ENCODE measurements at regions of chr15 and their contacts with region 1.

Region 1: DNA sequence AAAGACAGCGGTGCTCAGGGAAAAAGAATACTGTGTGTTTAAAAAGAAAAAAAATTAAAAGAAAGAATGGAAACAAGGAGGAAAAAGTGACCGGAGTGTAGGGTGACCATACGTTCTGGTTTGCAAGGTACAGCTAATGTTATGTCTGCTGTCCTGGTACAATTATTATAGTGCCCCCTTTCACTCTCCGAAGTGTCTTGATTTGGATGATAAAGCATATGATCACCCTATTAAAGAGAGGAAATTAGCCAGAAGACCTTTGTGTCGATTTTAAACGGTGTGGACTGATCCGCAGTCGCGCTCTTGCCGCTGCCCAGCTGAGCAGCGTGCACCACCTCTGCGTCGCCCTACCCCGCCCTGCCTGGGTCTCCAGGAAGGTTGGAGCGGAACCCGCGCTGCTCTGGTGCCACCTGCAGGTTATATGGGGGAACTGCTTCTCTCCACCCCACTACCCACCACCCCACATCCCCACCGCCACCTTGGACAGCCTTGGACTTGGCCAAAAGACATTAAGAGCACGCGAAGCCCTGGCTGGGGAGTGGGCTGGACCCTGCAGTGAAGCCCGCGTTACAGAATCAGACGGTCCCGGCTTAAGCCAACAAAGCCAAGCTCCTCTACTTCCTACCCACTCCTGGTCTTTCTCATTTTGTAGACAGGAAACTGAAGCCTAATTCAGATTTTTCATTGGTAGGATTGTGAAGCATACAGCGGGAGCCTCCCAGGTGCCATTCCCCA is 41.2 kb upstream of the UBE2Q2 start:
- DNase-seq: peak; percentile 54
- ATAC-seq: peak; percentile 100
- H3K4me3 ChIP-seq: peak overlapping the region; percentile 35; the same call in 1 of the 2 replicates
- H3K27ac ChIP-seq: no peak overlapping the region
- H3K4me1 ChIP-seq: no peaks in the 10 kb centered on the region
- H3K27me3 ChIP-seq: peaks cover 38% of the 10 kb centered on the region
- CTCF ChIP-seq: peak; percentile 82
- POLR2A ChIP-seq: no peak
- RAD21 ChIP-seq: peak; percentile 89

Region 2: GRCh38 chr15:75123395-75123794 is 678.6 kb before region 1 on chr15:
- CTCF ChIA-PET with region 1: no interaction called
- POLR2A ChIA-PET with region 1: no interaction called
- dilution Hi-C with region 1: no loop called
- in situ Hi-C with region 1: no loop called
- intact Hi-C with region 1: no loop called
- DNase-seq: peak; percentile 72
- ATAC-seq: peak; percentile 85
- H3K4me3 ChIP-seq: no peak overlapping the region
- H3K27ac ChIP-seq: no peak overlapping the region
- H3K4me1 ChIP-seq: peaks cover 4% of the 10 kb centered on the region
- H3K27me3 ChIP-seq: peaks cover 6% of the 10 kb centered on the region
- CTCF ChIP-seq: no peak
- POLR2A ChIP-seq: no peak
- RAD21 ChIP-seq: no peak

Region 3: GRCh38 chr15:75508840-75509532 is 293.0 kb before region 1 on chr15:
- CTCF ChIA-PET with region 1: no interaction called
- POLR2A ChIA-PET with region 1: no interaction called
- dilution Hi-C with region 1: no loop called
- in situ Hi-C with region 1: no loop called
- intact Hi-C with region 1: loop called (anchors 2 kb)
- DNase-seq: peak; percentile 65
- ATAC-seq: peak; percentile 66
- H3K4me3 ChIP-seq: no peak overlapping the region
- H3K27ac ChIP-seq: no peak overlapping the region
- H3K4me1 ChIP-seq: no peaks in the 10 kb centered on the region
- H3K27me3 ChIP-seq: no peaks in the 10 kb centered on the region
- CTCF ChIP-seq: peak; percentile 58
- POLR2A ChIP-seq: no peak
- RAD21 ChIP-seq: peak; percentile 65

Region 4: GRCh38 chr15:75639709-75640482 is 162.1 kb before region 1 on chr15 and contains the start of gene IMP3:
- CTCF ChIA-PET with region 1: no interaction called
- POLR2A ChIA-PET with region 1: no interaction called
- dilution Hi-C with region 1: no loop called
- in situ Hi-C with region 1: no loop called
- intact Hi-C with region 1: loop called (anchors 5 kb)
- DNase-seq: peak; percentile 95
- ATAC-seq: peak; percentile 96
- H3K4me3 ChIP-seq: peak within 1 kb of the TSS; percentile 77
- H3K27ac ChIP-seq: peak within 1 kb of the TSS; percentile 92
- H3K4me1 ChIP-seq: peaks cover 4% of the 10 kb centered on the region; the same call in 1 of the 2 replicates
- H3K27me3 ChIP-seq: no peaks in the 10 kb centered on the region
- CTCF ChIP-seq: no peak
- POLR2A ChIP-seq: peak; percentile 94
- RAD21 ChIP-seq: no peak
- total RNA-seq, gene IMP3: 42.1 and 84.7 TPM in 2 replicates

Region 5: GRCh38 chr15:75694241-75695182 is 107.5 kb before region 1 on chr15:
- CTCF ChIA-PET with region 1: interaction called, 4 read pairs
- POLR2A ChIA-PET with region 1: no interaction called
- dilution Hi-C with region 1: no loop called
- in situ Hi-C with region 1: loop called (anchors 5 kb)
- intact Hi-C with region 1: loop called (anchors 2 kb)
- DNase-seq: peak; percentile 99
- ATAC-seq: peak; percentile 98
- H3K4me3 ChIP-seq: no peak overlapping the region
- H3K27ac ChIP-seq: peak overlapping the region; percentile 91
- H3K4me1 ChIP-seq: peaks cover 25% of the 10 kb centered on the region
- H3K27me3 ChIP-seq: no peaks in the 10 kb centered on the region
- CTCF ChIP-seq: peak; percentile 36
- POLR2A ChIP-seq: peak; percentile 21; the same call in 1 of the 2 replicates
- RAD21 ChIP-seq: peak; percentile 30

Region 6: GRCh38 chr15:75712668-75713337 is 89.2 kb before region 1 on chr15 and contains the start of gene CSPG4:
- CTCF ChIA-PET with region 1: no interaction called
- POLR2A ChIA-PET with region 1: no interaction called
- dilution Hi-C with region 1: no loop called
- in situ Hi-C with region 1: no loop called
- intact Hi-C with region 1: no loop called
- DNase-seq: peak; percentile 73
- ATAC-seq: peak; percentile 91
- H3K4me3 ChIP-seq: peak within 1 kb of the TSS; percentile 75
- H3K27ac ChIP-seq: peak within 1 kb of the TSS; percentile 54
- H3K4me1 ChIP-seq: peaks cover 22% of the 10 kb centered on the region
- H3K27me3 ChIP-seq: no peaks in the 10 kb centered on the region
- CTCF ChIP-seq: no peak
- POLR2A ChIP-seq: peak; percentile 88
- RAD21 ChIP-seq: peak; percentile 11; the same call in 1 of the 2 replicates
- total RNA-seq, gene CSPG4: 12.4 and 14.7 TPM in 2 replicates

Region 7: GRCh38 chr15:75732809-75733451 is 69.1 kb before region 1 on chr15:
- CTCF ChIA-PET with region 1: interaction called, 5 read pairs
- POLR2A ChIA-PET with region 1: no interaction called
- dilution Hi-C with region 1: no loop called
- in situ Hi-C with region 1: no loop called
- intact Hi-C with region 1: loop called (anchors 2 kb)
- DNase-seq: peak; percentile 65
- ATAC-seq: peak; percentile 94
- H3K4me3 ChIP-seq: no peak overlapping the region
- H3K27ac ChIP-seq: no peak overlapping the region
- H3K4me1 ChIP-seq: peaks cover 10% of the 10 kb centered on the region
- H3K27me3 ChIP-seq: no peaks in the 10 kb centered on the region
- CTCF ChIP-seq: peak; percentile 79
- POLR2A ChIP-seq: no peak
- RAD21 ChIP-seq: peak; percentile 80

Measured in IMR-90 (cell line).